A673 (cell line): ENCODE measurements at regions of chr11 and their contacts with region 1.

Region 1: GRCh38 chr11:120642210-120642894 is 130.8 kb downstream of the GRIK4 start:
- DNase-seq: no peak
- H3K4me3 ChIP-seq: no peak overlapping the region
- H3K27ac ChIP-seq: no peak overlapping the region
- H3K4me1 ChIP-seq: peaks cover 13% of the 10 kb centered on the region
- H3K27me3 ChIP-seq: peaks cover 30% of the 10 kb centered on the region
- CTCF ChIP-seq: no peak

Region 2: DNA sequence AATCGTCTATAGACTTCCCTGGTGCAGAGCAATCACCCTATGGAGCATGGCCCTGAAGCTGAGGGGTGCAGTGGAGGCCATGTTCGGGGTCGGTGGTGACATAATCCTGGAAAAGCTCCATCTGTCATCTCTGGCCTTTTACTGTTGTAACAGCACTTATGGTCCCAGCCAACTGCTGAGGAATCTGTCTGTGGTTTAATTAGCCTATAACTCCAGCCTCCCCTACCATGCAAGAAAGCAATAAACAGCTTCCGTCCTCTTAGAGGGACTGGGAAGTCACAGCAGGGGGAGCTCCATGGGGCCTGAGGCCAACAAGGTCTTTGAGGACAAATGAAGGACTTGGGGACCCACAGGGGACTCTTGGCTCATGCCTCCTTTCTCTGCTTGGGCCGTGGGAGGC is 754.2 kb before region 1 on chr11:
- CTCF ChIA-PET with region 1: no interaction called
- POLR2A ChIA-PET with region 1: no interaction called
- intact Hi-C with region 1: no loop called
- DNase-seq: peak; percentile 51
- H3K4me3 ChIP-seq: no peak overlapping the region
- H3K27ac ChIP-seq: no peak overlapping the region
- H3K4me1 ChIP-seq: no peaks in the 10 kb centered on the region
- H3K27me3 ChIP-seq: peaks cover 18% of the 10 kb centered on the region
- CTCF ChIP-seq: no peak

Region 3: DNA sequence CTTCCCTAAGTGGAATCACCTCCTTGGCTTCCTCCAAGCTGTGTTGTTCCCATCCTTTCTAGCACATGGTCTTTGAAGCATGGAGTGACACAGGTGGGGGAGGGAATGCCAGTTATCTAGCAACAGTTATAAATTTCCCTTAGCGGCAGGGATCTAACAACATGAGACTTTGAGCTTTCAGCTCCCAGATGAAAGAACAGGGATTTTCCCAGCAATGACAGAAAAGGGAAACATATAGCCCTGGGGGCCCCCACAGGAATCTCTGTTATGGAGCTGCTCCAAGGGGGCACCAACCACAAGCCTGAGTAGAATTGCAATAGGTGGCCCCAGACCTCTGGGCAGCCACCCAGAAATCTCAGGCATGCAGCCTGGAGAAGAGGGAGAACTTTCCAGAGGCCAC is 32.2 kb after region 1 on chr11:
- CTCF ChIA-PET with region 1: no interaction called
- POLR2A ChIA-PET with region 1: no interaction called
- intact Hi-C with region 1: no loop called
- DNase-seq: no peak
- H3K4me3 ChIP-seq: no peak overlapping the region
- H3K27ac ChIP-seq: no peak overlapping the region
- H3K4me1 ChIP-seq: no peaks in the 10 kb centered on the region
- H3K27me3 ChIP-seq: peaks cover 42% of the 10 kb centered on the region
- CTCF ChIP-seq: no peak

Region 4: GRCh38 chr11:120694726-120695125 is 52.4 kb after region 1 on chr11:
- CTCF ChIA-PET with region 1: no interaction called
- POLR2A ChIA-PET with region 1: interaction called, 11 read pairs
- intact Hi-C with region 1: no loop called
- DNase-seq: peak; percentile 76
- H3K4me3 ChIP-seq: no peak overlapping the region
- H3K27ac ChIP-seq: no peak overlapping the region
- H3K4me1 ChIP-seq: peaks cover 5% of the 10 kb centered on the region
- H3K27me3 ChIP-seq: peaks cover 27% of the 10 kb centered on the region
- CTCF ChIP-seq: no peak